Lower leg skin (tissue), 4 donors: ENCODE measurements at regions of chr3 and their contacts with region 1.

Region 1: DNA sequence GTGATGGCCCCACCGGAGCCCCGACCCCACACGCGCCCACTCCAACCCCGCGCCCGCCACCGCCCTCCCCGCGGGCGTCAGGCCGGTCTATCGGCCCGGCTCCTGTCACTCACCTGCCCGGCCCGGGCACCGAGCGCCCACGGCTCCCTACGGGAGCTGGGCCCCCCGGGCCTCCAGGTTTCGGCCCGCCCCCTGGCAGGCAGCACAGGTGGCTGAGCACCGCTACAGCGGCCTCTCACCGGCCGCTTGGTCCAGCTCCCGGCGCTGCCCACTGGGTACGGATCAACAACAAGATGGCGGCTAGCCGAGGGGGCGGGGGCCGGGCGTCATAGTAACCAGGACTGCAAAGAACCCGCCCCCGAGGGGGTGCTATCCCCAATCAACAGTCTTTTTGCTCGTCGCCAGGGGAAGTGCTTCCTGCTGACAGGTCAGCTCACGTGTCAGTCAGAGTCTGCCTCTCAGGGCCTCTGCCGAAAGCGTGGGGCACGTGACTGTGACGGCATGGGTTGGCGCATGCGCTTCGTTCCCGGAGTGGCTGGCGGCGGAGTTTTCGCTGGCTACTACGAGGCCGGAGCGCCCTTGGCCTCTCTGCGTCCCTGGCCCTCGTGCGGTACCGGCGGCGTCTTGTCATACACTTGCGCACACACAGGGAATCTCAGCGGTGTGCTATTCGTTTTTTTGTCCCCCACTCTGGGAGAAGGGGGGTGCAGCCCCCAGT is at the start of gene IP6K1:
- DNase-seq: peak; percentile 100
- H3K4me3 ChIP-seq: peak within 1 kb of the TSS; percentile 78
- CTCF ChIP-seq: no peak
- POLR2A ChIP-seq: peak in 1 of 2 donors; percentile 83
- total RNA-seq, gene IP6K1: 44.1 to 56.5 (median 51.6) TPM

Region 2: GRCh38 chr3:49723628-49724551 is 62.5 kb before region 1 on chr3 and contains the start of gene GMPPB:
- intact Hi-C with region 1: loop called (anchors 10 kb)
- DNase-seq: peak; percentile 95 to 99
- H3K4me3 ChIP-seq: peak within 1 kb of the TSS; percentile 96
- CTCF ChIP-seq: no peak
- POLR2A ChIP-seq: no peak
- total RNA-seq, gene GMPPB: 10.1 to 27.6 (median 18.2) TPM

Region 3: DNA sequence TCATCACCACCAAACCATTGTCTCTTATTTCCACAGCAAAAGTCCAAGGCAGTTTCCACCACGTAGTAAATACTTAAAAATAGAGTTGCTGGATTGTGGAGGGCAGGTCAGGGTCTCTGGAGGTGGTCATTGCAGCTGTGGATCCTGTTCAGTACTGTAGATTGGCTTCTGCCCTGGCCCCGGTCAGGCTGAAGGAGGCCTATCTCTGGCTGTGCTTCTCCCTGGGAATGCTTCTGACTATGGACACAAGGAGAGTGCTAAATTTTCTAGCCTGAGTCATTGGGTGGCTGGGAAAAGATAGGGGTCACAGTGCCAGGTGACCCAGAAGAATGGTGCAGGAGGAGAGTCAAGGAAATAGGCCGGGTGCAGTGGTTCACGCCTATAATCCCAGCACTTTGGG is 36.3 kb before region 1 on chr3:
- intact Hi-C with region 1: no loop called
- DNase-seq: peak in 1 of 2 donors; percentile 40
- H3K4me3 ChIP-seq: no peak overlapping the region
- CTCF ChIP-seq: no peak
- POLR2A ChIP-seq: no peak